CD4-positive, alpha-beta T cell (primary cell): ENCODE measurements at regions of chr9 and their contacts with region 1.

Region 1: DNA sequence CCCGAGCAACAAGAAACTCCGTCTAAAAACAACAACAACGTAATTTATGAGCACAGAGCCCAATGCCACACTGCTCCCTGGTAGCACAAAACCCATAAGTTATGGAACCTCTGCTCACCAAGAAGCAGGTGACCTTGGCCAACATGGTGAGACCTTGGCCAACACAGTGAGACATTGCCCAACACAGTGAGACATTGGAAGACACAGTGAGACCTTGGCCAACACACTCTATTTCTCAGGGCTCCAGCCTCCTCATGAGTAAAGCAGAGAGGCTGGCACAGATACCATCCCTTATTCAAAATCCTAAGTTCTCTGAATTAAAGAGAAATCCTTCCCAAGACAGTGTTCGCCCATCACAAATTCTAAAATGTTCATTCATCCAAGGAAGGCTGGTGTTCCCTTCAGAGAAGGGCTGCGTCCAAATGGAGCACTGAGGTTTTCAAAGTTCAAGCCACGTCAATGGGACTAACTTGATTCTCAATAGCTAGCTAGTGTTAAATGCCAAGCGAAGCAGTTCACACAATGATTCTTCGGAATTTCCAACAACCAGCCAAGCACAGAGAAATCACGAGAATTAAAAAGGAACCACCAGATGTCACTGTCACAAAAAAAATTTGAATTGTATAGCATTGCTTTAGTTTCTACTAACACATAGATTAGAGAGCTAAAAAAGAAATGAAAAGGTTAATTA is 29.5 kb downstream of the TTC39B start:
- DNase-seq: peak in 3 of 14 experiments; percentile 29 to 59 (median 56)
- ATAC-seq: no peak
- H3K4me3 ChIP-seq: no peak overlapping the region
- H3K4me3 Mint-ChIP-seq: no peak overlapping the region
- H3K27ac ChIP-seq: no peak overlapping the region
- H3K27ac Mint-ChIP-seq: peak overlapping the region; percentile 52
- H3K4me1 ChIP-seq: peaks cover 19% of the 10 kb centered on the region
- H3K4me1 Mint-ChIP-seq: peaks cover 77% of the 10 kb centered on the region
- H3K27me3 ChIP-seq: no peaks in the 10 kb centered on the region
- H3K27me3 Mint-ChIP-seq: no peaks in the 10 kb centered on the region
- CTCF ChIP-seq: peak; percentile 68

Region 2: GRCh38 chr9:14153310-14154008 is 1124.1 kb before region 1 on chr9:
- CTCF ChIA-PET with region 1: no interaction called
- POLR2A ChIA-PET with region 1: no interaction called
- intact Hi-C with region 1: no loop called
- DNase-seq: no peak
- ATAC-seq: no peak
- H3K4me3 ChIP-seq: no peak overlapping the region
- H3K4me3 Mint-ChIP-seq: no peak overlapping the region
- H3K27ac ChIP-seq: no peak overlapping the region
- H3K27ac Mint-ChIP-seq: no peak overlapping the region
- H3K4me1 ChIP-seq: no peaks in the 10 kb centered on the region
- H3K4me1 Mint-ChIP-seq: peaks cover 7% of the 10 kb centered on the region
- H3K27me3 ChIP-seq: no peaks in the 10 kb centered on the region
- H3K27me3 Mint-ChIP-seq: peaks cover 18% of the 10 kb centered on the region
- CTCF ChIP-seq: no peak

Region 3: GRCh38 chr9:15306757-15307534 is 29.4 kb after region 1 on chr9 and contains the start of gene TTC39B:
- CTCF ChIA-PET with region 1: interaction called, 4 read pairs
- POLR2A ChIA-PET with region 1: interaction called, 7 read pairs
- intact Hi-C with region 1: loop called (anchors 1 to 2 kb)
- DNase-seq: peak; percentile 36 to 90 (median 68)
- ATAC-seq: peak; percentile 60
- H3K4me3 ChIP-seq: peak within 1 kb of the TSS; percentile 99
- H3K4me3 Mint-ChIP-seq: peak within 1 kb of the TSS; percentile 99
- H3K27ac ChIP-seq: peak within 1 kb of the TSS; percentile 75 to 82
- H3K27ac Mint-ChIP-seq: peak within 1 kb of the TSS; percentile 87
- H3K4me1 ChIP-seq: peaks cover 34% of the 10 kb centered on the region
- H3K4me1 Mint-ChIP-seq: peaks cover 64% of the 10 kb centered on the region
- H3K27me3 ChIP-seq: no peaks in the 10 kb centered on the region
- H3K27me3 Mint-ChIP-seq: no peaks in the 10 kb centered on the region
- CTCF ChIP-seq: no peak
- total RNA-seq, gene TTC39B: 37.6 to 43.6 TPM

Region 4: DNA sequence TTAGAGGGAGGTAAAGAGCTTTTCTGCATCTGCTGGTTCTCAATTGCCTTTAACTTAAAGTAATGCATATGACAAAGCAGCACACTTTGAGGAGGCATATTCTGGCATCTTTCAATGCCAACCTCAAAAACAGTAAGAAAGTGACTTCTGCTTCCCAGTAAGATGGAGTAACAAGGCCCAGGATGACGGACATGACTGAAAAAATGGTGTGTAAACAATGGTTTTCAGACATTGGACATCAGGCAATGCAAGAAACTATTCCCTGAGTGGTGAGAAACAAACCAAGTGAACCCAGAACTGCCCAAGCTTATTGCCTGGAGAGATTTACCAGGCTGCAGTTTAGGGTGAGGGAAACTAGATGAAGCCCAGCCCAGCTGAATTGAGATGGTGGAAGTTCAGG is 69.3 kb after region 1 on chr9:
- CTCF ChIA-PET with region 1: no interaction called
- POLR2A ChIA-PET with region 1: no interaction called
- intact Hi-C with region 1: no loop called
- DNase-seq: no peak
- ATAC-seq: no peak
- H3K4me3 ChIP-seq: no peak overlapping the region
- H3K4me3 Mint-ChIP-seq: no peak overlapping the region
- H3K27ac ChIP-seq: no peak overlapping the region
- H3K27ac Mint-ChIP-seq: no peak overlapping the region
- H3K4me1 ChIP-seq: peaks cover 7% of the 10 kb centered on the region
- H3K4me1 Mint-ChIP-seq: peaks cover 7% of the 10 kb centered on the region
- H3K27me3 ChIP-seq: no peaks in the 10 kb centered on the region
- H3K27me3 Mint-ChIP-seq: no peaks in the 10 kb centered on the region
- CTCF ChIP-seq: no peak

Region 5: DNA sequence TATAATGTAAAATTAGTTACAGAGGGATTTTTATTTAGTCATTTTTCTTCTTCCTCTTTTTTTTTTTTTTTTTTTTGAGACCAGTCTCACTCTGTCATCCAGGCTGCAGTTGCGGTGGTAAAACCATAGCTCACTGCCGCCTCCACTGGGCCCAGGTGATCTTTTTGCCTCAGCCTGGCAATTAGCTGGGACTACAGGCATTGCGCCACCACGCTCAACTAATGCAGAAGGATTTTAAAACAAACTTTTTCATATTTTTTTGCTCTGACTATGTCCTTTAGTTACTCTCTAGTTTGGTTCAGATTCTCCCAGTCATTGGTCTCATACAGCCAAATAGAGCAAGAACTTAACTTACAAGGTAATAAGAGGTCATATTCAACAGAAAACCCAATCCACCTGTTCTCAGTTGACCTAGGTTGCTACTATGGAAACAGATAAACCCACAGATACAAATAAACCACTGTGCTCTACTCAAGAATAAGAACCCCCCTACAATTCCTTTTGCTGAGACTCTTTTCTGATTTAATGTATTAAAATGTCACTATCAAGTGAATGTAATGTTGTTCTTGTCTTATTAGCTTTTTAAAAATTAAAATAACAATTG is 79.6 kb after region 1 on chr9:
- CTCF ChIA-PET with region 1: interaction called, 4 read pairs
- POLR2A ChIA-PET with region 1: interaction called, 3 read pairs
- intact Hi-C with region 1: loop called (anchors 2 to 5 kb)
- DNase-seq: peak in 13 of 14 experiments; percentile 14 to 76 (median 36)
- ATAC-seq: peak; percentile 84
- H3K4me3 ChIP-seq: no peak overlapping the region
- H3K4me3 Mint-ChIP-seq: no peak overlapping the region
- H3K27ac ChIP-seq: no peak overlapping the region
- H3K27ac Mint-ChIP-seq: peak overlapping the region; percentile 10
- H3K4me1 ChIP-seq: peaks cover 4% of the 10 kb centered on the region
- H3K4me1 Mint-ChIP-seq: peaks cover 23% of the 10 kb centered on the region
- H3K27me3 ChIP-seq: no peaks in the 10 kb centered on the region
- H3K27me3 Mint-ChIP-seq: no peaks in the 10 kb centered on the region
- CTCF ChIP-seq: no peak

Region 6: GRCh38 chr9:15389173-15389572 is 111.6 kb after region 1 on chr9:
- CTCF ChIA-PET with region 1: no interaction called
- POLR2A ChIA-PET with region 1: no interaction called
- intact Hi-C with region 1: no loop called
- DNase-seq: no peak
- ATAC-seq: no peak
- H3K4me3 ChIP-seq: no peak overlapping the region
- H3K4me3 Mint-ChIP-seq: no peak overlapping the region
- H3K27ac ChIP-seq: no peak overlapping the region
- H3K27ac Mint-ChIP-seq: no peak overlapping the region
- H3K4me1 ChIP-seq: no peaks in the 10 kb centered on the region
- H3K4me1 Mint-ChIP-seq: no peaks in the 10 kb centered on the region
- H3K27me3 ChIP-seq: no peaks in the 10 kb centered on the region
- H3K27me3 Mint-ChIP-seq: no peaks in the 10 kb centered on the region
- CTCF ChIP-seq: no peak

Region 7: DNA sequence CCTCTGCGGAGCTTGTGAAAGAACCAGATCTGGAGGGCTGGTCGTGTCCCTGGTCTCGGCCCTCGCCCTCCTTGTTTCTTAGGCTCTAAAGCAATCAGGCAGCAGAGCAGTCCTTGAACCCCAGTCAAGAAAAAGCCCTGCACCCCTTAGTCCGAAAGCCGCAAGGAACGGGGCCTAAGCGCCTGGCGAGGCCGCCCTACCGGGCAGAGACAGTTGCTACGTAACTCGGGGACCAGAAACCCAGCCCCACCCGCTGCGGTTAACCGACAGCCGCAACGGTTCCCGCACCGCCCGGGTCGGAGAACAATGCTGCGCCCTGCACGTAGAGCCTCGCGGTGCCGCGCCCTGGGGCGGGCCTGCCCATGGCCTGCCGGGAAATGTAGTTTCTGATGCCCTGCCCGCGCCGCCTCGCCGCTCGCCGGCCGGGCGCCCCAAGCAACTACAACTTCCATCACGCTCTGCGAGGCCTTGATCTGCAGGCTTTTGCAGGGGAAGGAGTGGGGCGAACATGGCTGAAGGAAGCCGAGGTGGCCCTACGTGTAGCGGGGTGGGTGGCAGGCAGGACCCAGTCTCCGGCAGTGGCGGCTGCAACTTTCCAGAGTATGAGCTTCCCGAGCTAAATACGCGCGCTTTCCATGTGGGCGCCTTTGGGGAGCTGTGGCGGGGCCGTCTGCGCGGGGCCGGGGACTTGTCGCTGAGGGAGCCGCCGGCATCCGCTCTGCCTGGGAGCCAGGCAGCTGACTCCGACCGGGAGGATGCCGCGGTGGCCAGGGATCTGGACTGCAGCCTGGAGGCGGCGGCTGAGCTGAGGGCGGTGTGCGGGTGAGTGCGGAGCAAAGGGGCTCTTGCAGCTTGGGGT is 145.1 kb after region 1 on chr9 and contains the start of gene SNAPC3:
- CTCF ChIA-PET with region 1: interaction called, 4 read pairs
- POLR2A ChIA-PET with region 1: interaction called, 3 read pairs
- intact Hi-C with region 1: loop called (anchors 1 kb)
- DNase-seq: peak; percentile 82 to 96 (median 90)
- ATAC-seq: peak; percentile 97
- H3K4me3 ChIP-seq: peak within 1 kb of the TSS; percentile 89
- H3K4me3 Mint-ChIP-seq: peak within 1 kb of the TSS; percentile 96
- H3K27ac ChIP-seq: peak within 1 kb of the TSS; percentile 70 to 82
- H3K27ac Mint-ChIP-seq: peak within 1 kb of the TSS; percentile 96
- H3K4me1 ChIP-seq: peaks cover 21% of the 10 kb centered on the region
- H3K4me1 Mint-ChIP-seq: peaks cover 51% of the 10 kb centered on the region
- H3K27me3 ChIP-seq: no peaks in the 10 kb centered on the region
- H3K27me3 Mint-ChIP-seq: no peaks in the 10 kb centered on the region
- CTCF ChIP-seq: no peak
- total RNA-seq, gene SNAPC3: 3.3 to 4.7 TPM

Region 8: DNA sequence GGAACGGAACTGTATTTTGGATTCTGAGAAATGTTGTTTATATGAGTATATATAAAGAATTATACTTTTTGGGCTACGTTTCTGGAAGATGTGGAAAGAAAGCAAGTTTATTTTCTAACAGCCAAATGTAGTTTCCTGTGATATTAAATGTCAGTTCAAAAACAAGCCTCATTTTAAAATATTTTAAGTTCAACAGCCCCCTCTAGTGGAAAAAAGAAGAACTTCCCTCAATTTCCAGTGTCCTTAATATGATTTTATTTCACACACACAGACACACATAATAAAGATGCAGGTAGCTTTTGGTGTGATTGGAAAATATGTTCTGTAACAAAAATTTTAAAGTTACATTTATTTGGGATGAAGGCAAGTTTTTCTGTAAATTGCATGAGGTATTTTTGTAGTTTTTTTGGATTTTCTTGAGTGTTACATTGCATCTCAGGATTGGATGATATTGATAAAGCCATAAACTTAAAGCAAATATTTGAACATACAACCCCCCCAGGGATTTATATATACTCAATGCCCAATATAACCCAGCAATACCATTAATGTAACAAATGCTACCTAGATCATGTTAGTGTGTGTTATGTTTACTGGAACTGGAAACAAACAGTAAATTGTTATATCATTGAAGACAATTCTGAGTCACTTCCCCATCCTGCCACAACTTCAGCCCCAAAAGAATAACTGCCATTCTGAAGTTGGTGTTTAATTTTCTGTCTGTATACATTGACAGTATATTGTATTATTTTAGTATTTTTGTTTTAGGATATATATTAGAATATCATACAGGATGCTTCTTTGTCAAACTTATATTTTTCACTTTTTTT is 329.3 kb after region 1 on chr9:
- CTCF ChIA-PET with region 1: no interaction called
- POLR2A ChIA-PET with region 1: no interaction called
- intact Hi-C with region 1: loop called (anchors 1 to 2 kb)
- DNase-seq: peak in 4 of 14 experiments; percentile 13 to 68 (median 62)
- ATAC-seq: no peak
- H3K4me3 ChIP-seq: no peak overlapping the region
- H3K4me3 Mint-ChIP-seq: no peak overlapping the region
- H3K27ac ChIP-seq: no peak overlapping the region
- H3K27ac Mint-ChIP-seq: no peak overlapping the region
- H3K4me1 ChIP-seq: no peaks in the 10 kb centered on the region
- H3K4me1 Mint-ChIP-seq: no peaks in the 10 kb centered on the region
- H3K27me3 ChIP-seq: no peaks in the 10 kb centered on the region
- H3K27me3 Mint-ChIP-seq: no peaks in the 10 kb centered on the region
- CTCF ChIP-seq: peak; percentile 76